ENCODE measurements at regions of chr18 and their contacts with region 1.

Region 1: DNA sequence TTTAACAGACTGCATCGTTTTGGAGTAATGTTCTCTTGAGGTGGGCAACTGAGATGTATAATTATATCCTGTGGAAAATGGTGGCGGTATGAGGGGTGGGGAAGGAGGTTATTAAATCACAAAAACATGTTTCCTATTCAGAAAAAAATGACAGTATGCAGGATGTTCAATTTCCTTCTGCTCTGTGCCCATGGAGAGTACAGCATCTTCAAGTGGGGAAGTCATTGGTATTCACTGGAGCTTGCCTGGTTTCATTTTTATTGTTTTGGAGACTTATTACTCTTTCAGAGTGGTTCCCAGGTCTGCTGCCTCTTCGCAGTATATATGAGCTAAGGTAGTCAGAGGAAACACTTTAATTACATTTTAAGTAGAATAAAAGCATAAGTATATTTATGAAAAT is 318.8 kb upstream of the RAB12 start:
- DNase-seq: no peak
- ATAC-seq: peak in 1 of 4 donors; percentile 60
- H3K4me3 ChIP-seq: no peak overlapping the region
- H3K27ac ChIP-seq: no peak overlapping the region
- H3K4me1 ChIP-seq: peaks cover 0 to 21% (median 2%) of the 10 kb centered on the region in 12 donors
- H3K27me3 ChIP-seq: no peaks in the 10 kb centered on the region
- CTCF ChIP-seq: no peak
- POLR2A ChIP-seq: no peak

Region 2: GRCh38 chr18:8041526-8042111 is 248.8 kb before region 1 on chr18:
- intact Hi-C with region 1: loop called in 1 of 10 experiments (anchors 5 kb)
- DNase-seq: no peak
- ATAC-seq: no peak
- H3K4me3 ChIP-seq: no peak overlapping the region
- H3K27ac ChIP-seq: no peak overlapping the region
- H3K4me1 ChIP-seq: peaks cover 0 to 31% (median 6%) of the 10 kb centered on the region in 12 donors
- H3K27me3 ChIP-seq: no peaks in the 10 kb centered on the region
- CTCF ChIP-seq: no peak
- POLR2A ChIP-seq: no peak

Region 3: DNA sequence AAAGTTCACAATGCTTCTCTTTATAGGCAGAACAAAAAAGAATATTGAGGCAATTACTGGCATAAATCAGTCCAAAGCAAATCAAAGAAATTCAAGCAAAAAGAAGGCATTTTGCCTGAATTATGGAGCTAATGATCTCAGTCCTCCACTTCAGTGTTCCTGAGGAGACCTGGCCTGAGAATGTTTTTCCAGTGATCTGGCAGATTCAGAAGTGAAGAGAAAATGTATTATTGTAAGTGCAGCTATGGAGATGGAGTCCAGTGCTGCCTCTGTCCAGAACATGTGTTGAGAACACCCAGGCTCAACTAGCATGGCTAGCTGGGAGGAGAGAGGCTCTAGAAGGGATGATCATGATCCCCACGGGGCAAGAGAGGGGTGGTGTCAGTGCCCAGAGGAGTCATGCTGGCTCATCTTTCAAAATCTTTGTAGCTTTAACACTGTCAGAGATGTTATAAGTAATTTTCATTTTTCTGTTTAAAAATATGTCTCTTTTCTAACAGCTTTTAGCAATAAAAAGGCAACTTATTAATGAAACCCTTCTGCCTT is 48.2 kb before region 1 on chr18:
- intact Hi-C with region 1: no loop called
- DNase-seq: no peak
- ATAC-seq: no peak
- H3K4me3 ChIP-seq: no peak overlapping the region
- H3K27ac ChIP-seq: no peak overlapping the region
- H3K4me1 ChIP-seq: peaks cover 0 to 6% (median 0%) of the 10 kb centered on the region in 12 donors
- H3K27me3 ChIP-seq: no peaks in the 10 kb centered on the region
- CTCF ChIP-seq: no peak
- POLR2A ChIP-seq: no peak